ENCODE measurements at regions of chr5 and their contacts with region 1.

Region 1: DNA sequence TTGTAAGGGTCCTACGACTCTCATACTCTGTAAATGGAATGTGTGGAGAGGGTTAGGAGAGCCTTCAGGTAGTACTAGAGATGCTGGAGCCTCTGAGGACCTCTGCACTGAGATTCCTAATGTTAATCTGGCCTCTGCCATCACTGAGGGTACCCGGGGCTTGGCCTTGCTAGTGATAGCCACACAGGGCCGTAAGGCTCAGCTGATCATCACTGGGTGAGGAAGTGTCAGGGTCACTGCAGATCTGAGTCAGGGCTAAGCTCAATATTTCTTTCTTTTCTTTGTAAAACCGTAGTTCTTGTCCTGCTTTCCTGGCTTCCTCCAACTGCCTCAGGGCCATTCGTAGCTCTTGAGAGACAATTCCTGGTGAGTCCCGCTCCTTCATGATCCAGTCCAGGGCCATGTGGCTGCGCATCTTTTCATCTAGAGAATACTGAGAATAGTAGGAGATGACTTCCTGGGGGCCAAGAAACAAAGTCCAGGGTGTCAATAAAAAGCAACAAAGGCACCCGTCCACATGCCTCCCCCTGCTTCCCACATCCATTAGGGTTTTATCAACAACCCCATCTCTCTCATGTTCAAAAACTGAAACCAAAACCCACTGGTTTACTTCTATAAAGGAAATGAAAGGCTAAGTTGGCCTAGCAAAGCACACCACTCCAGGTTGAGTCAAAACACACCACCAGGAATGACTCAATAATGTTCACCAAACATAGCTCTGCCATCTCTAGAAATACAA is 47.7 kb downstream of the LIX1 start:
- DNase-seq: peak; percentile 83
- H3K4me3 Mint-ChIP-seq: peak overlapping the region; percentile 56
- H3K27ac Mint-ChIP-seq: peak overlapping the region; percentile 83
- H3K4me1 Mint-ChIP-seq: peaks cover 21% of the 10 kb centered on the region
- H3K27me3 Mint-ChIP-seq: peaks cover 36% of the 10 kb centered on the region

Region 2: DNA sequence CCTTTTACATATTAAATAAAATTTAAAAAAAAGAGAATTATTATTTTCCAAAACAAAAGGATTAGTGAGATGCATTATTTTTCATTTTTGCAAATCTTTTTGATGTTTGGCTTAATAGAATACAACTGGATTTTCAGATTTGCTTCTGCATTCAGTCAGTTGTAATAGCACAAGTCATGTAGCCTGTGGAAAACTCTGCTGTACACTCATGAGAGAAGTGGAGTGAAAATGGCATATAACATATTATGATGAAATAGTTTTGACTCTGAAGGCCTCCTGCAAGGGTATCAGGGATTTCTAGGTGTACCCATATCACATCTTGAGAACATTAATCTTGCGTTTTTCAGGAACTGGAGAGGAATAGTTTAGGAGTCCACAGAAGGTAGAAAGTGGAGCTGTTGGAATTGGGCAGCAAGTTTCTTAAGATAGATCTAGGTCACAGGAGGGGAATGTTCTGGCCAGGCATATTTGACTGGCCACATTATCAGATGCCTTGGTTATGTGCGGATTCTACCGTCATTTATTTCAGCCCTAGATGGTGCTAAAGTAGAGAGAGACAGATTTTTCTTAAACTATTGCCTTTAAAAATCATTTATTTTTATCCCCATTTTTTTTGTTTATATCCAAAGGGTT is 142.5 kb before region 1 on chr5:
- intact Hi-C with region 1: no loop called
- DNase-seq: peak; percentile 32
- H3K4me3 Mint-ChIP-seq: no peak overlapping the region
- H3K27ac Mint-ChIP-seq: no peak overlapping the region
- H3K4me1 Mint-ChIP-seq: peaks cover 47% of the 10 kb centered on the region
- H3K27me3 Mint-ChIP-seq: no peaks in the 10 kb centered on the region

Region 3: DNA sequence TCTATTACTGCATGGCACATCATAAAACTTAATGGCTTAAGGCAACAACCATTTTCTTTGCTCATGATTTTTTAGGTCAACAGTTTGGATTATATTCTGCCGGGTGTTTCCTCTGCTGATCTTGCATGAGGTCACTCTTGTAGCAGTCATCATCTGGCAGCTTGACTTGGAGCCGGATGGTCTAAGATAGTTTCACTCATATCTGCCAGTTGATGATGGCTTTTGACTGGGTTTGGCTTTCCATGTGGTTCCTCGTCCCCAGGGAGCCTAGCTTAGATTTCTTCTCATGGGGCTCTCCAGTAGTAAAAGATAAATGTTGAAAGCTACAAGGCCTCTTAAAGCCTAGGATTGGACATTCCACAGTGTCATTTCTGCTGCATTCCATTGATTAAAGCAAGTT is 131.5 kb before region 1 on chr5:
- intact Hi-C with region 1: loop called (anchors 1 kb)
- DNase-seq: peak; percentile 68
- H3K4me3 Mint-ChIP-seq: peak overlapping the region; percentile 79
- H3K27ac Mint-ChIP-seq: peak overlapping the region; percentile 92
- H3K4me1 Mint-ChIP-seq: peaks cover 58% of the 10 kb centered on the region
- H3K27me3 Mint-ChIP-seq: no peaks in the 10 kb centered on the region

Region 4: GRCh38 chr5:96997265-96997859 is 97.4 kb before region 1 on chr5:
- intact Hi-C with region 1: no loop called
- DNase-seq: peak; percentile 67
- H3K4me3 Mint-ChIP-seq: no peak overlapping the region
- H3K27ac Mint-ChIP-seq: no peak overlapping the region
- H3K4me1 Mint-ChIP-seq: peaks cover 23% of the 10 kb centered on the region
- H3K27me3 Mint-ChIP-seq: no peaks in the 10 kb centered on the region

Region 5: GRCh38 chr5:97009212-97009898 is 85.4 kb before region 1 on chr5:
- intact Hi-C with region 1: loop called (anchors 5 kb)
- DNase-seq: no peak
- H3K4me3 Mint-ChIP-seq: no peak overlapping the region
- H3K27ac Mint-ChIP-seq: peak overlapping the region; percentile 14
- H3K4me1 Mint-ChIP-seq: peaks cover 13% of the 10 kb centered on the region
- H3K27me3 Mint-ChIP-seq: no peaks in the 10 kb centered on the region

Region 6: GRCh38 chr5:97131139-97131710 is 36.5 kb after region 1 on chr5:
- intact Hi-C with region 1: loop called (anchors 5 kb)
- DNase-seq: no peak
- H3K4me3 Mint-ChIP-seq: no peak overlapping the region
- H3K27ac Mint-ChIP-seq: no peak overlapping the region
- H3K4me1 Mint-ChIP-seq: peaks cover 10% of the 10 kb centered on the region
- H3K27me3 Mint-ChIP-seq: peaks cover 16% of the 10 kb centered on the region

Region 7: GRCh38 chr5:97149709-97150108 is 55.0 kb after region 1 on chr5:
- intact Hi-C with region 1: no loop called
- DNase-seq: no peak
- H3K4me3 Mint-ChIP-seq: no peak overlapping the region
- H3K27ac Mint-ChIP-seq: no peak overlapping the region
- H3K4me1 Mint-ChIP-seq: no peaks in the 10 kb centered on the region
- H3K27me3 Mint-ChIP-seq: peaks cover 12% of the 10 kb centered on the region

Region 8: DNA sequence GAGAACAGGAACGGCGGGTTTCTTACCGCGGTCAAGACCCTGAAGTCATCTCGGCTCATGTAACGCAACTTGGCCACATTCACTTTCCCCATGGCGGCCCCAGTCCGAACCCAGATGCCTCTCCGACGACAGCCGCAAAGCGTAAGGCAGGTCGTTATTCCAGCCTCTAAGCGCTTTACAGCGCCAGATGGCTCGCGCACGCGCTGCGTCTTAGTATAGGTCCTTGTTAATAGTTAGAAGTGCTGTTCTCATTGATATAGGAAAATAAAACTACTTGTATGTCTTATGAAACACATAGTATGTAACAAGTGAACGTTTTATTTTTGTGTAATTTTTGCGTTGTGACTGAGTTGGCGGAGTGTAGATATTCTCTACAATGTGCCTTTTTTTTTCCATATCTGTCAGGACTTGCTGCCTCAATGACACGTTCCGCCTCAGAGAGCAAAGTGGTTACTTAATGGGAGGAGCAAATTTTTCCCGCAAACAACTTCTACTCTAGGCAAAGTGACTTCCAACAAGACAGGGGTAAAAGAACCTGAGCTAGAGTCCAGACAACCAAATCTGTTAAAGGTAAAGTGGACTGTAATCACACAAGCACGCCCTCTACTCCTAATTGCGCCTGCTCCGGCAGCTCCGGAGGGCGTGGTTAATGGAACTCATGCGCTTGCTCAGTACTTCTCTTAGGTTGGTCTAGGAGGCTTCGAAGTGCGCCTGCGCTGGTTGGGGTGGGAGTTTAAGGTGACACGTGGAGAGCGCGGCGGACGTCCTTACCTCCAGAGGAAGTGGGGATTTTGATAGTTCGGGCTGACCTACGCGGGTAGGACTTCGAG is 88.6 kb after region 1 on chr5 and contains the start of gene RIOK2:
- intact Hi-C with region 1: loop called (anchors 1 kb)
- DNase-seq: peak; percentile 97
- H3K4me3 Mint-ChIP-seq: peak within 1 kb of the TSS; percentile 89
- H3K27ac Mint-ChIP-seq: peak within 1 kb of the TSS; percentile 100
- H3K4me1 Mint-ChIP-seq: peaks cover 24% of the 10 kb centered on the region
- H3K27me3 Mint-ChIP-seq: peaks cover 4% of the 10 kb centered on the region
- total RNA-seq, gene RIOK2: 40.8 and 42.0 TPM in 2 replicates

Region 9: GRCh38 chr5:99019812-99020697 is 1925.3 kb after region 1 on chr5:
- intact Hi-C with region 1: loop called (anchors 10 kb)
- DNase-seq: no peak
- H3K4me3 Mint-ChIP-seq: no peak overlapping the region
- H3K27ac Mint-ChIP-seq: no peak overlapping the region
- H3K4me1 Mint-ChIP-seq: peaks cover 6% of the 10 kb centered on the region
- H3K27me3 Mint-ChIP-seq: no peaks in the 10 kb centered on the region